CD8-positive, alpha-beta T cell (primary cell): ENCODE measurements at regions of chr1 and their contacts with region 1.

Region 1: GRCh38 chr1:206725109-206725963 is 40.6 kb downstream of the MAPKAPK2 start:
- DNase-seq: peak in 8 of 9 experiments; percentile 34 to 78 (median 64)
- ATAC-seq: peak; percentile 57
- H3K4me3 ChIP-seq: no peak overlapping the region
- H3K4me3 Mint-ChIP-seq: peak overlapping the region; percentile 5
- H3K27ac ChIP-seq: no peak overlapping the region
- H3K27ac Mint-ChIP-seq: peak overlapping the region; percentile 25
- H3K4me1 ChIP-seq: peaks cover 27% of the 10 kb centered on the region
- H3K4me1 Mint-ChIP-seq: peaks cover 59% of the 10 kb centered on the region
- H3K27me3 ChIP-seq: no peaks in the 10 kb centered on the region
- H3K27me3 Mint-ChIP-seq: no peaks in the 10 kb centered on the region
- CTCF ChIP-seq: peak; percentile 47

Region 2: GRCh38 chr1:206706298-206706791 is 19.0 kb before region 1 on chr1:
- CTCF ChIA-PET with region 1: interaction called, 15 read pairs
- POLR2A ChIA-PET with region 1: no interaction called
- intact Hi-C with region 1: no loop called
- DNase-seq: no peak
- ATAC-seq: no peak
- H3K4me3 ChIP-seq: no peak overlapping the region
- H3K4me3 Mint-ChIP-seq: no peak overlapping the region
- H3K27ac ChIP-seq: no peak overlapping the region
- H3K27ac Mint-ChIP-seq: peak overlapping the region; percentile 11
- H3K4me1 ChIP-seq: peaks cover 72% of the 10 kb centered on the region
- H3K4me1 Mint-ChIP-seq: peaks cover 85% of the 10 kb centered on the region
- H3K27me3 ChIP-seq: no peaks in the 10 kb centered on the region
- H3K27me3 Mint-ChIP-seq: no peaks in the 10 kb centered on the region
- CTCF ChIP-seq: no peak

Region 3: GRCh38 chr1:206761159-206761768 is 35.9 kb after region 1 on chr1:
- CTCF ChIA-PET with region 1: interaction called, 25 read pairs
- POLR2A ChIA-PET with region 1: no interaction called
- intact Hi-C with region 1: no loop called
- DNase-seq: no peak
- ATAC-seq: no peak
- H3K4me3 ChIP-seq: no peak overlapping the region
- H3K4me3 Mint-ChIP-seq: no peak overlapping the region
- H3K27ac ChIP-seq: no peak overlapping the region
- H3K27ac Mint-ChIP-seq: no peak overlapping the region
- H3K4me1 ChIP-seq: peaks cover 59% of the 10 kb centered on the region
- H3K4me1 Mint-ChIP-seq: peaks cover 33% of the 10 kb centered on the region
- H3K27me3 ChIP-seq: no peaks in the 10 kb centered on the region
- H3K27me3 Mint-ChIP-seq: no peaks in the 10 kb centered on the region
- CTCF ChIP-seq: no peak

Region 4: DNA sequence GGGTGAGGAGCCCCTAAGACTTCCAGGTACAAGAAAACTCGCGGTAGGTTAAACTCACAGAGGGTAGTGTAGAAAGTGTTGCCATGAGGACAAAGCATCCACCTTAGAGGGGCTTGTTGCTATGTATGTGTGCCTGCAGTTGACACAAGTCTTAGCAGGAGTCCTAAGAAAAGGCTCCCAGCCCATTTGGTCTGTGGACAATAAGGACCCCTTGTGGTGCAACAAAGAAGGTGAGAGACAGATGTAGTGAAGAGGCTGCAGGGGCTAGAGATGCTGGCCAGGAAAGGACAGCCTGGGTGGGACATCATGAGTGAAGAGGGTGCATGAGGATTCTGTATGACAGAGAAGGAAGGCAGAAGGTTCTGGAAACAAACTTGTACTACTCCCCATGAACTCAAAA is 83.3 kb after region 1 on chr1:
- CTCF ChIA-PET with region 1: interaction called, 628 read pairs
- POLR2A ChIA-PET with region 1: interaction called, 4 read pairs
- intact Hi-C with region 1: loop called (anchors 1 kb)
- DNase-seq: peak; percentile 16 to 87 (median 54)
- ATAC-seq: peak; percentile 91
- H3K4me3 ChIP-seq: no peak overlapping the region
- H3K4me3 Mint-ChIP-seq: no peak overlapping the region
- H3K27ac ChIP-seq: no peak overlapping the region
- H3K27ac Mint-ChIP-seq: peak overlapping the region; percentile 10
- H3K4me1 ChIP-seq: peaks cover 25% of the 10 kb centered on the region
- H3K4me1 Mint-ChIP-seq: peaks cover 42% of the 10 kb centered on the region
- H3K27me3 ChIP-seq: no peaks in the 10 kb centered on the region
- H3K27me3 Mint-ChIP-seq: no peaks in the 10 kb centered on the region
- CTCF ChIP-seq: peak; percentile 50

Region 5: DNA sequence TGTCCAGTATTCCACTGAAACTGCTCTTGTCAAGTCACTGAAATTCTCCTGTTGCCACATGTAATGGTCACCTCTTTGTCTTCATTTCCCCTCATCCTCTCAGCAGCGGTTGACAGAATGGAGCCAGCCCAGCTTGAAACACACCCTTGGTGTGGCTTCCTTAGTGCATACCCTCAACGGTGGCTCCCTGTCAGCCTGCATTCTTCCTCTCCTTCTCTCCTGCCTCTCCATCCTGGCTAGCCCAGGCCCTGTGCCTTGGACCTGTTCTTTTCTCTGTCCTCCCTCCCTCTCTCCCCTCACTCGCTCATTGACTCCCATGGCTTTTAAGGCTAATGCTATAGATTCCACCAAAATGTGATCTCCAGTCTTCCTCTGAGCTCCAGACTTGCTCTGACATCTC is 192.7 kb after region 1 on chr1:
- CTCF ChIA-PET with region 1: interaction called, 42 read pairs
- POLR2A ChIA-PET with region 1: no interaction called
- intact Hi-C with region 1: no loop called
- DNase-seq: no peak
- ATAC-seq: no peak
- H3K4me3 ChIP-seq: peak overlapping the region; percentile 90 to 99
- H3K4me3 Mint-ChIP-seq: no peak overlapping the region
- H3K27ac ChIP-seq: peak overlapping the region; percentile 46 to 95
- H3K27ac Mint-ChIP-seq: peak overlapping the region; percentile 97
- H3K4me1 ChIP-seq: peaks cover 57% of the 10 kb centered on the region
- H3K4me1 Mint-ChIP-seq: peaks cover 76% of the 10 kb centered on the region
- H3K27me3 ChIP-seq: no peaks in the 10 kb centered on the region
- H3K27me3 Mint-ChIP-seq: no peaks in the 10 kb centered on the region
- CTCF ChIP-seq: no peak

Region 6: GRCh38 chr1:206949208-206949607 is 223.9 kb after region 1 on chr1:
- CTCF ChIA-PET with region 1: interaction called, 14 read pairs
- POLR2A ChIA-PET with region 1: no interaction called
- intact Hi-C with region 1: no loop called
- DNase-seq: no peak
- ATAC-seq: no peak
- H3K4me3 ChIP-seq: no peak overlapping the region
- H3K4me3 Mint-ChIP-seq: no peak overlapping the region
- H3K27ac ChIP-seq: no peak overlapping the region
- H3K27ac Mint-ChIP-seq: no peak overlapping the region
- H3K4me1 ChIP-seq: no peaks in the 10 kb centered on the region
- H3K4me1 Mint-ChIP-seq: peaks cover 4% of the 10 kb centered on the region
- H3K27me3 ChIP-seq: no peaks in the 10 kb centered on the region
- H3K27me3 Mint-ChIP-seq: no peaks in the 10 kb centered on the region
- CTCF ChIP-seq: no peak